Adrenal gland (tissue), 19 donors: ENCODE measurements at regions of chr3 and their contacts with region 1.

Region 1: GRCh38 chr3:33544126-33544525 is 103.9 kb upstream of the UBP1 start:
- DNase-seq: no peak
- H3K4me3 ChIP-seq: no peak overlapping the region
- H3K27ac ChIP-seq: no peak overlapping the region
- H3K4me1 ChIP-seq: no peaks in the 10 kb centered on the region
- H3K27me3 ChIP-seq: no peaks in the 10 kb centered on the region
- CTCF ChIP-seq: no peak
- POLR2A ChIP-seq: no peak

Region 2: DNA sequence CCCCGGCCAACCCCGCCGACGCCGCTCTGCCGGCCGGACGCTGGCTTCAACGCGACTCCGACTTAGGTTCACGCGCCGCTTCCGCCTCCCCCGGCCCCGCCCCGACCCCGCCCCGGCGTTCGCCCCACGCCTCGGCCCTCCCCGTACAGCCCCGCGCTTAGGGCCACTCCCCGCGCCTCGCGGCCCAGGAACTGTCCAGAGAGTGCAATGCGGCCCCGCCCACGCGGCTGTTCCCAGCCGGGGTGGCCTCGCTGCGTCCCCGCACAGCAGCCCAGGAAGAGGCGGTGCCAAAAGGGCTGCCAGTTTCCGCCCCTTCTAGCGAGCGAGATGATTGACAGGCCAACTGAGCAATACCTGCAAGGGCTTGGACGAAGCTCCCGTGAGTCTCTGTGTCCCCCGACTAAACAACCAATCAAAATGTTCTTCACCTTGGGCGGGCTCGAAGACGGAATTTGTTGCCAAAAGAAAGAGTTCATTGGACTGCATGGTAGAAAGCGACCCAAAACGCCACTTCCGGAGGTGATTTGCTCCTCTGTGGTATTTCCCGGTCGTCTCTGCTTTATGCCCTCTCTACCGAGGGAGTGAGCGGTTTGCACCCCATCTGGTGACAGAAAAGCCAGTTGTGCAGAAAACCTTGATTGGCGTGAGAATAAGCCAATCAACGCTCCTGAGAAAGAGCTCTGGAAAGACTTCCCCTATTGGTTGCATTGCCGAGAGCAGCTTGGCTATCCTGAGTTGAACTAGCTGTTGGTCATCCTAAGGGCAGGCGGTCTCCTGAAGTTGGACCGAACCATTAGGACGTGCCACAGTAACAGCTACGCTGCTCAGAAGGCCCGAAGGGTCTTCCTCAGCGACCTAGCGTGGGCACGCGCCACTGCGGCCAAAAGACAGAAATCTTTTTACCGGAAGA is 103.5 kb before region 1 on chr3 and contains the start of gene UBP1:
- intact Hi-C with region 1: loop called in 1 of 2 experiments (anchors 10 kb)
- DNase-seq: peak; percentile 99 to 100 (median 100)
- H3K4me3 ChIP-seq: peak within 1 kb of the TSS; percentile 40 to 90 (median 60)
- H3K27ac ChIP-seq: peak within 1 kb of the TSS; percentile 91 to 100 (median 97)
- H3K4me1 ChIP-seq: peaks cover 20 to 41% of the 10 kb centered on the region in 2 donors
- H3K27me3 ChIP-seq: no peaks in the 10 kb centered on the region
- CTCF ChIP-seq: peak in 2 of 6 experiments; percentile 16 to 21
- POLR2A ChIP-seq: peak; percentile 64 to 95
- total RNA-seq, gene UBP1: 32.7 to 74.5 (median 50.3) TPM